ENCODE measurements at regions of chr17 and their contacts with region 1.

Region 1: DNA sequence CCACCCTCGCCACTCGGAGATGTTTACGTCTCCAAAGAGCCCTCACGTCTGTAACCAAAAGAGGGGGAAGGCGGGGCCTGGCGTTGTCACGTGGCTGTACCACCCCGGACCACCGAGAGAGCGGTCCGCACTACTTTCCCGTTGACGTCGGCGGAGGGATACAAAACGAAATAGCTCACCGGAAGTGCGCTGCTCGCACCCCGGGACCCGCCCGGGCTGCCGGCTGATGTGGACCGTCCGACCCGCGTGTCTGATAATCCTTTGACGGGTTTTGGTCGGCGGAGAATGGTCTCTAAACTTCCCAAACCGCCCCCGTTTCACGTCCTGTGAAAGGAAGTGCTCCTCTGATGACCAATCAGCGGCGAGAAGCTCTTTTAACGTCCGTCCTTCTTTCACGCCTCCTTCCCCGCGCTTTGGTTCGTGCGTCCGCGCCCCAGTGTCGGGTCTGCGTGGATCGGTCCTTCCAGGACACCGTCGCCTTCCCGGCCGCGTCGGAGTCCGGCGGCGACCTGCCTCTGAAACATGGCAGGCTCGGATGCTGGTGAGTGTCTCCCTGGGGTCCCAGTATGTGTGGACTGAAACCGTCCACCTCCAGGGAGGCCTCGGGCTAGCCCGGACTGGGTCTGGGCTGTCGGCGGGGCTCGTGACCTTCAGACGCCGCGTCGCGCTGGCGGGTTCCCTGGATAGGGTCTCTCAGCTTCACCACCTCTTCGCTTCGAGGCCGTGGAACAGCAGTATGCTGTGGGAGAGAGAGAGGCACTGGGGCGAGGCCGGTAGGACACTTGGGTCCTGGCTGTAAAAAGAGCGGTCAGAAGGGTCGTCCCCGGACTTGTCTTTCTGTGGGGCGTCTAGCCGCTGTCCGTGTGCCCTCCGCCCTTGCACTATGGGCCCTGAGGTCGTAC is at the start of gene CEP95:
- DNase-seq: peak; percentile 96
- H3K4me3 Mint-ChIP-seq: peak within 1 kb of the TSS; percentile 99
- H3K27ac Mint-ChIP-seq: peak within 1 kb of the TSS; percentile 100
- H3K4me1 Mint-ChIP-seq: peaks cover 33% of the 10 kb centered on the region
- H3K27me3 Mint-ChIP-seq: no peaks in the 10 kb centered on the region
- CTCF ChIP-seq: no peak
- total RNA-seq, gene CEP95: 57.2 and 61.6 TPM in 2 replicates

Region 2: GRCh38 chr17:63961355-63962212 is 545.2 kb before region 1 on chr17:
- CTCF ChIA-PET with region 1: no interaction called
- POLR2A ChIA-PET with region 1: no interaction called
- intact Hi-C with region 1: no loop called
- DNase-seq: peak; percentile 40
- H3K4me3 Mint-ChIP-seq: no peak overlapping the region
- H3K27ac Mint-ChIP-seq: no peak overlapping the region
- H3K4me1 Mint-ChIP-seq: no peaks in the 10 kb centered on the region
- H3K27me3 Mint-ChIP-seq: no peaks in the 10 kb centered on the region
- CTCF ChIP-seq: no peak

Region 3: DNA sequence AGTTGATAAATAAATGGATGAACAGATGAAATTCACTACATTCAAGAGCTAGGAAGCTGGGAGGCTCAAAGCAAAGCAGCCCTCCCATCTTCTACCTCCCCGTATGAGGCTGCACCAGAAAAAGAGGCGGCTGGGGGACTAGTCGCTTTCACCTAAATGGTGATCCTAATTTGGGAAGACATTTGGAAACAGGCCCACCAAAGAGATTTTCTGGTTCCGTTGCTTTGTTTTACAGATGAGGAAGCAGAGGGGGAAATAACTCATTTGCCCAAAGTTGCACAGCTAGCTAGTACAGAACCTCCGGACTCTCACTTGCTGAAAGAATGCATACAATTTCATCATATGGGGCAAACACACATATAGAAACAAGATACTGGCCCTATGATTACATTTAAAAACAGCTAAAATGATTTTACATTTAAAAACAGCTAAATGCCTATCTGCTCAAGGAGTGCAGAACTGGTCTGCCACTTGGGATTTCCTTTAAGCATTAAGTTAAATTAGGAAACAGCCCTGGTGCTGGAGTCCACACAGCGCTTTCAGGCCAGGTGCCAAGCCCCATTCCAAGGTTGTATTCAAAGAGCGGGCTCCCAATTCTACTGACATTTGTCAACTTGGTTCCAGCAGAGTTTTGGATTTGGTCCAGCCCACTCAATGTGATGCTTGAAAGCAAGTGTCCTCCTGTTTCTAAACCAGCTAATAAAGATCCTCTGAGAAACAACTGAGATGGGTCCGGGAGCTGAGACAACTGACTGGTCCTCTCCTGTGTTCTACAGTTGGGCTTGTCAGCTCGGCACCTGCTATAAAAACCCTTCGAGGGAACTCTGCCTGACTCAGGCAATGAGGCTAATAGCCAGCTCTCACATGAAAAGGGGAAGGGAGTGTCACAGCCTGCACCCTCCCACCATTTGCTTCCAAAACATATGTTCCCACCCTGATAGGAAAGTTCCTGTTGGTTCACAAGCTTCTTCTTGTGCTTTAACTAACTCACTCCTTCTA is 388.5 kb before region 1 on chr17:
- CTCF ChIA-PET with region 1: no interaction called
- POLR2A ChIA-PET with region 1: interaction called, 13 read pairs
- intact Hi-C with region 1: no loop called
- DNase-seq: peak; percentile 76
- H3K4me3 Mint-ChIP-seq: no peak overlapping the region
- H3K27ac Mint-ChIP-seq: no peak overlapping the region
- H3K4me1 Mint-ChIP-seq: peaks cover 44% of the 10 kb centered on the region
- H3K27me3 Mint-ChIP-seq: no peaks in the 10 kb centered on the region
- CTCF ChIP-seq: no peak

Region 4: GRCh38 chr17:64484380-64484779 is 22.4 kb before region 1 on chr17:
- CTCF ChIA-PET with region 1: no interaction called
- POLR2A ChIA-PET with region 1: interaction called, 10 read pairs
- intact Hi-C with region 1: no loop called
- DNase-seq: no peak
- H3K4me3 Mint-ChIP-seq: no peak overlapping the region
- H3K27ac Mint-ChIP-seq: no peak overlapping the region
- H3K4me1 Mint-ChIP-seq: no peaks in the 10 kb centered on the region
- H3K27me3 Mint-ChIP-seq: no peaks in the 10 kb centered on the region
- CTCF ChIP-seq: no peak

Region 5: DNA sequence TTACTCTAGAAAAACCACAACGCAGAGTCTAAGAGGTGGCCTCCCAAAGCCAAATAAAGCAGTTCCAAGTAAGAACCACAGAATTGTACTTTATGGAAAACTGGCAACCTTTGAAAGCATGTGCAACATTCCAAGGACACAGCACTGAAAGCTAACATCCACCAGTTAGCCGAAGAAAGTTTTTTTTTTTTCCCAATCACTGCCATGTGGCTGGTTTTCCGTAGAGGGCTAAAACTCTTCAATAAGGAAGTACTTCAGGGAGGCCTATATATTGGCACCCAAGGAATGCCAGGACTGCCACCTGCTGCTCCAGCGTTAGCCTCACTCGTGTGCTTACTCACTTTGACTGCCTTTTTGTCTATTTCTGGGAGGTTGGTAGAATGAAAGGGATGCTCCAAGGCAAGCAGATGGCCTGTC is 25.1 kb after region 1 on chr17:
- CTCF ChIA-PET with region 1: no interaction called
- POLR2A ChIA-PET with region 1: interaction called, 32 read pairs
- intact Hi-C with region 1: no loop called
- DNase-seq: no peak
- H3K4me3 Mint-ChIP-seq: no peak overlapping the region
- H3K27ac Mint-ChIP-seq: no peak overlapping the region
- H3K4me1 Mint-ChIP-seq: peaks cover 4% of the 10 kb centered on the region
- H3K27me3 Mint-ChIP-seq: no peaks in the 10 kb centered on the region
- CTCF ChIP-seq: no peak

Region 6: GRCh38 chr17:64635647-64636307 is 128.9 kb after region 1 on chr17:
- CTCF ChIA-PET with region 1: no interaction called
- POLR2A ChIA-PET with region 1: interaction called, 28 read pairs
- intact Hi-C with region 1: no loop called
- DNase-seq: peak; percentile 54
- H3K4me3 Mint-ChIP-seq: peak overlapping the region; percentile 33
- H3K27ac Mint-ChIP-seq: peak overlapping the region; percentile 80
- H3K4me1 Mint-ChIP-seq: peaks cover 28% of the 10 kb centered on the region
- H3K27me3 Mint-ChIP-seq: no peaks in the 10 kb centered on the region
- CTCF ChIP-seq: no peak

Region 7: GRCh38 chr17:64975329-64976087 is 468.7 kb after region 1 on chr17:
- CTCF ChIA-PET with region 1: no interaction called
- POLR2A ChIA-PET with region 1: interaction called, 13 read pairs
- intact Hi-C with region 1: no loop called
- DNase-seq: peak; percentile 93
- H3K4me3 Mint-ChIP-seq: peak overlapping the region; percentile 100
- H3K27ac Mint-ChIP-seq: peak overlapping the region; percentile 99
- H3K4me1 Mint-ChIP-seq: peaks cover 21% of the 10 kb centered on the region
- H3K27me3 Mint-ChIP-seq: no peaks in the 10 kb centered on the region
- CTCF ChIP-seq: no peak